ENCODE measurements at regions of chr11 and their contacts with region 1.

Region 1: DNA sequence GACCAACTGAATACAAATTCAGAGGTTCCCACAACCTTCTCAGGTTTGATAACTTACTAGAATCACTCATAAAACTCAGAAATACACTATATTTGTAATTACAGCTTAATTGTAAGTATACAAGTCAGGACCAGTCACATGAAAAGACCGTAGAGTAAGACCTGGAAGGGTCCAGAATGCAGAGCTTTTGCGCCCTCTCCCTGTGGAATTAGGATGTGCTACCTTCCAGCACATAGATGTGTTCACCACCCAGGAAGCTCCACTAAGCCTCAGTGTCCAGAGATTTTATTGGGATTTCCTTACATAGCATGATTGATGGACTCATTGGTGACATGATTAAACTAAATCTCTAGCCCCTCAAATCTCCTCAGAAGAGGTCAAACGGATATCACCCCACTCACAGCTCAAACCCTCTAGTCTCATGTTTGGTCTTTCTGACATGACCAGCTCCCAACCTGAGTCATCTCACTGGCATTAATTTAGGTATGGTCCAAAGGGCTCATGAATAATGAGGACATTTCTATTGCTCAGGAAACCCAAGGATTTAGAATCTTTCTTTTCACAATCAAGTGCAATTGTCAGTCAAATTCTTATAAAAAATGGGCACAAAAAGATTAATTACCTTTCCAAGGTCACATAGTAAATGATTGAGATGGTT is 77.2 kb upstream of the UBASH3B start:
- DNase-seq: no peak
- H3K4me3 ChIP-seq: no peak overlapping the region
- H3K27ac ChIP-seq: no peak overlapping the region
- H3K4me1 ChIP-seq: peaks cover 10% of the 10 kb centered on the region
- H3K27me3 ChIP-seq: no peaks in the 10 kb centered on the region
- CTCF ChIP-seq: no peak

Region 2: GRCh38 chr11:122215244-122215992 is 362.9 kb before region 1 on chr11:
- CTCF ChIA-PET with region 1: no interaction called
- dilution Hi-C with region 1: no loop called
- in situ Hi-C with region 1: no loop called
- intact Hi-C with region 1: loop called (anchors 1 kb)
- DNase-seq: no peak
- H3K4me3 ChIP-seq: no peak overlapping the region
- H3K27ac ChIP-seq: no peak overlapping the region
- H3K4me1 ChIP-seq: peaks cover under 1% of the 10 kb centered on the region
- H3K27me3 ChIP-seq: no peaks in the 10 kb centered on the region
- CTCF ChIP-seq: peak; percentile 92 to 98

Region 3: GRCh38 chr11:122797651-122798050 is 219.4 kb after region 1 on chr11:
- CTCF ChIA-PET with region 1: no interaction called
- dilution Hi-C with region 1: no loop called
- in situ Hi-C with region 1: no loop called
- intact Hi-C with region 1: no loop called
- DNase-seq: no peak
- H3K4me3 ChIP-seq: no peak overlapping the region
- H3K27ac ChIP-seq: no peak overlapping the region
- H3K4me1 ChIP-seq: peaks cover 17% of the 10 kb centered on the region
- H3K27me3 ChIP-seq: no peaks in the 10 kb centered on the region
- CTCF ChIP-seq: no peak

Region 4: GRCh38 chr11:122853971-122854446 is 275.7 kb after region 1 on chr11:
- CTCF ChIA-PET with region 1: no interaction called
- dilution Hi-C with region 1: no loop called
- in situ Hi-C with region 1: no loop called
- intact Hi-C with region 1: loop called (anchors 1 kb)
- DNase-seq: peak; percentile 72
- H3K4me3 ChIP-seq: no peak overlapping the region
- H3K27ac ChIP-seq: no peak overlapping the region
- H3K4me1 ChIP-seq: peaks cover 35% of the 10 kb centered on the region
- H3K27me3 ChIP-seq: no peaks in the 10 kb centered on the region
- CTCF ChIP-seq: peak; percentile 63 to 67